ENCODE measurements at regions of chr6 and their contacts with region 1.

Region 1: GRCh38 chr6:148166339-148166968 is 176.2 kb upstream of the SASH1 start:
- DNase-seq: no peak
- ATAC-seq: no peak
- H3K4me3 ChIP-seq: no peak overlapping the region
- H3K27ac ChIP-seq: no peak overlapping the region
- H3K4me1 ChIP-seq: no peaks in the 10 kb centered on the region
- H3K27me3 ChIP-seq: no peaks in the 10 kb centered on the region
- CTCF ChIP-seq: peak; percentile 69; the same call in 1 of the 2 replicates

Region 2: DNA sequence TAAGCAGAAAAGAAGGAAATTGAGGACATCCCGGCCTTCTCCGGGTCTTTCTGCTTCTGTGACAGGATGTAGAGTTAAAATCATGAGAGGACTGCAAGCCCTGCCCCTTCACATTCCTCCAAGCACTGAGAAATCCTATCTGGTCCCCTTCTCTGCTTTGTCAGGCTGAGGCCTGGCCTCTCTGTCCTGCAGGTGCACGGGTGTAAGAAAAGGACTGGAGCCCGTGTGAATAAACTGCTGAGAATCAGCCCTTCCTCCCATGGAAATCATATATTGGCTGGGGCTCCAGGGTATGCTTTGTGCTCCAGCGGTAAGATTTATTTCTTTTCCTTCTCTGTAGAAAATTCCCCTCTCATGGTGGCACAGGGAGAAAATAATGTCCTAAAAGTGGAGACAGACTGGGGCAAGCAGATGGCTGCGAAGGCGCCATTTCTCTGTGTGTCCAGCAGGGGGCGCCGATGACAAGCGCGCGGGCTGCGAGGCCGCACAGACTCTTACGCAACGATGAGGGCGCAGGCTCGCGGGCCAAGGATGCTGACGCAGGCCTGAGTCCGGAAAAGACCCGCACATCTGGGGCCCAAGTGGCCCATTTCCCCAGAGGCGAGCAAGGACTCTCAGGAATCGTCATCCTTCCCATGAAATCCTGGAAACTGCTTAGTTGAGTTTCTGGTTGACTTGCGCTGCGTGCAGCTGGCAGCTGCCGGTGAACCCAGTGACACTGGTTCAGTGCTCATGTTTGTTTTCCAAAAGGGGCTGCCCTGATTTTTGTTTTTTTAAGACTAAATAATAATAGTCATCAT is 1309.1 kb before region 1 on chr6:
- CTCF ChIA-PET with region 1: no interaction called
- POLR2A ChIA-PET with region 1: no interaction called
- in situ Hi-C with region 1: no loop called
- intact Hi-C with region 1: loop called (anchors 5 kb)
- DNase-seq: peak; percentile 43
- ATAC-seq: peak; percentile 99
- H3K4me3 ChIP-seq: peak overlapping the region; percentile 43 to 67
- H3K27ac ChIP-seq: peak overlapping the region; percentile 94
- H3K4me1 ChIP-seq: peaks cover 12% of the 10 kb centered on the region; the same call in 1 of the 2 replicates
- H3K27me3 ChIP-seq: no peaks in the 10 kb centered on the region
- CTCF ChIP-seq: peak; percentile 99

Region 3: GRCh38 chr6:147390909-147391536 is 775.4 kb before region 1 on chr6:
- CTCF ChIA-PET with region 1: no interaction called
- POLR2A ChIA-PET with region 1: no interaction called
- in situ Hi-C with region 1: no loop called
- intact Hi-C with region 1: loop called (anchors 10 kb)
- DNase-seq: no peak
- ATAC-seq: no peak
- H3K4me3 ChIP-seq: no peak overlapping the region
- H3K27ac ChIP-seq: no peak overlapping the region
- H3K4me1 ChIP-seq: peaks cover 23% of the 10 kb centered on the region; the same call in 1 of the 2 replicates
- H3K27me3 ChIP-seq: no peaks in the 10 kb centered on the region
- CTCF ChIP-seq: peak; percentile 55; the same call in 1 of the 2 replicates

Region 4: DNA sequence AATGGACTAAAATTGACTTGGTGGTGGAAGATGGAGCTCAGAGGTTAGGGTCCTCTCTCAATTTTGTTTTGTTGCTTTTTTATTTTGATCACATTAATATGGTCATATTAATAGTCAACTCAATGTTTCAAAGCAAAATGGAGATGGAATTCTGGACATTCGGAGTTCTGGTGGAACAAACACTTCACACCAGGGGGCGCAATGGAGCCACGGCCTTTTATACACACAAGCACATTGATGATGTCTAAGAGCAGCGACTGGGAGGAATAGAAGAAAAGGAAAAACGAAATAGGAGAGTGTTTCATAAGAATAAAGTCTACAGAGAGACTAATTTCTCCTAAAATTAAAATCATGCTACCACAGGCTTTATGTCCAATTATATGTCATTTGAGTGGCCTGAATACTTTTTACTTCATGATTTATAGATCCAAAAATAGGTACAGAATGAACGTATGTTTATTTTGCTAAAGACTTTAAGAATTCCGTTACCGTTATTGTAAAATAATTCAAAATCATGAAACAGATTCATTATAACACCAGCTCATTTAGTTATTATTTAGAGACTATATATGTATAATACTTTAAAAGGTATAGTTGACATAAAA is 21.4 kb before region 1 on chr6:
- CTCF ChIA-PET with region 1: no interaction called
- POLR2A ChIA-PET with region 1: no interaction called
- in situ Hi-C with region 1: no loop called
- intact Hi-C with region 1: loop called (anchors 1 kb)
- DNase-seq: peak; percentile 39
- ATAC-seq: peak; percentile 78
- H3K4me3 ChIP-seq: 0 out of 4 replicates have a peak overlapping the region, but pooled peaks of 1 of the 2 experiments have one; percentile 3
- H3K27ac ChIP-seq: no peak overlapping the region
- H3K4me1 ChIP-seq: no peaks in the 10 kb centered on the region; the same call in 1 of the 2 replicates
- H3K27me3 ChIP-seq: no peaks in the 10 kb centered on the region
- CTCF ChIP-seq: peak; percentile 92

Region 5: DNA sequence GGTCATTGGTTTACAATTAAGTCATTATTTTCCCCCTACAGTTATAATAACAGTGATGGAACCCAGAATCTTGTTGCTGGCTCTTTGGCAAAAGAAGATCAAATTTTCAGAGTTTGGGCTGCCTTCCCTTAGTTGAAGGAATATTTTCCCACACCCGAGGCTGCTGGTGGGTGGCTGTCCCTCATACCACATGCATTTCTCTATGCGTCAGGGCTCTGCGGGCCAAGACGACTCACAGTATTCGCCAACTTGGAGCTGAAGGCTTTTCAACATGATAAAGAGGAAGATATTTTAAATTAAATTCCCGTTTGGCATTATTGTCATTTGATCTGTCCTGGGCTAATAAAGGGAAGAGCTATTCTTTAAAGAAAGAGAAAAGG is 74.0 kb after region 1 on chr6:
- CTCF ChIA-PET with region 1: no interaction called
- POLR2A ChIA-PET with region 1: no interaction called
- in situ Hi-C with region 1: no loop called
- intact Hi-C with region 1: no loop called
- DNase-seq: no peak
- ATAC-seq: no peak
- H3K4me3 ChIP-seq: no peak overlapping the region
- H3K27ac ChIP-seq: no peak overlapping the region
- H3K4me1 ChIP-seq: no peaks in the 10 kb centered on the region
- H3K27me3 ChIP-seq: no peaks in the 10 kb centered on the region
- CTCF ChIP-seq: no peak

Region 6: DNA sequence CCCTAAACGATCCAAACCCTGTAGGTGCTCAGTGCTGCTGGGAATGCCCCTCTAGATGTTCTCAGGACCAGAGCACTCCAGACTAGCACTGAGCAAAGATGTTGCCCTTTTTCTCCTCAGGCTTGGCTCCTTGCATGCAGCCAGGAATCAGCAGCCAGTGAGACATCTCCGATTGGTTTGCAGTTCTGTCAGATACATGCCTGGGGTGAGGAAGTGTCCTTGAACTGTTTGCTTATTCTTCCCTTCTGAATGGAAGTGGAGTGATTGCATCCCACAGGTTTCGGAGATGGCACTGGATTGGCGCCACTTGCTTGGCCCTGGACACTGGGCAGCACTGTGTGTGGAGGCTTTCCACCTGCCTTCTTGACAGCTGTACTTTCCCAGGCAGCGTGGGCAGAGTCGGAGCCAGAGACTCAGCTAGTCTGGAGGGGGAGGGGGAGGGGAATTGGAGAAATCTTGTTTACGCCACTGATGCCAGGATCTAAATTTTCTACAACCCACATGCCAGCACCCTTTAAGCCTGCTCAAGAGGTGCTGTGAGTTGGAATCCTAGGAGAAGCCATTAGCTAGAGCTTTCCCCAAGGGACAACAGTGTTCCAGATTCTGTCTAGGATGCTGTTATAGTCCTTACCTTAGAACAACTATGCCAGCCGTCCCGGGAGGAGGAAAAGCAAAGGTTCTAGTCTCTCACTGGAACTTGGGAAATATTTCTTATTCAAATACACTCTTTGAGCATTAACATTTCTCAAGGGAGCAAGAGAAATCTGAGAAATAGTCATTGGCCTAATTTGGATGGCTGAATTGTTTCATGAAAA is 126.9 kb after region 1 on chr6:
- CTCF ChIA-PET with region 1: no interaction called
- POLR2A ChIA-PET with region 1: no interaction called
- in situ Hi-C with region 1: no loop called
- intact Hi-C with region 1: no loop called
- DNase-seq: no peak
- ATAC-seq: no peak
- H3K4me3 ChIP-seq: no peak overlapping the region
- H3K27ac ChIP-seq: no peak overlapping the region
- H3K4me1 ChIP-seq: no peaks in the 10 kb centered on the region
- H3K27me3 ChIP-seq: no peaks in the 10 kb centered on the region
- CTCF ChIP-seq: no peak

Region 7: GRCh38 chr6:148329596-148330381 is 163.3 kb after region 1 on chr6:
- CTCF ChIA-PET with region 1: no interaction called
- POLR2A ChIA-PET with region 1: no interaction called
- in situ Hi-C with region 1: no loop called
- intact Hi-C with region 1: no loop called
- DNase-seq: no peak
- ATAC-seq: no peak
- H3K4me3 ChIP-seq: no peak overlapping the region
- H3K27ac ChIP-seq: no peak overlapping the region
- H3K4me1 ChIP-seq: no peaks in the 10 kb centered on the region
- H3K27me3 ChIP-seq: no peaks in the 10 kb centered on the region
- CTCF ChIP-seq: no peak